Left ventricle myocardium inferior (tissue), 1 donor: ENCODE measurements at regions of chr15 and their contacts with region 1.

Region 1: DNA sequence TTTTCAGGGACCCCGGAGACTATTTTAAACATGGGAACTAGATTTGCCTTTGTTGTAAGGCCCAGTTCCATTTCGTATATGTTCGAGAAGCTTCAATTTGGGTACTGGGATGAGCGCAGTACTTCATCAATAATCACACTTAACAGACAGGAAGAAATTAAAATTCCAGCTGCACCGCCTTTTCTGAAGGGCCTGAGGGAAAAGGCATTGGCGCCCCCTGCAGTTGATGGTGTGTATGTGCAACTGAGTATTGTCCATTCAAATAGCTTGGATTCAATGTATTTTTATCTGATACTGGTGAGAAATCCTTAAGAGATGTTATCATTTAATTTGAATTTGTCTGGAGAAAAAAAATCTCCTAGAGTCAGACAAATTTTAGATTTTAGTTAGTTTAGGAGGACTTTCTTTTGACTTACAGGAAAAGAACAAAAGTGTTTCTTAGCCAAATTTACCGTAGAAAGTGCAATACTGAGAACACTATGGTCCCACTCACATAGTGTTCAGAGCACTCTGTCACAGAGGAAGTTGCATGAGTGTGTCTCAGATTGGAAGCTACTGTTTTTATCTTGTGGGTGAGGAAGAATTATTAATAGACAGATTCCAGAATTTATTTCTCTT is 5.4 kb upstream of the ALDH1A2 start:
- DNase-seq: peak; percentile 52
- H3K4me3 ChIP-seq: no peak overlapping the region
- H3K27ac ChIP-seq: no peak overlapping the region
- H3K4me1 ChIP-seq: peaks cover 8% of the 10 kb centered on the region
- H3K27me3 ChIP-seq: peaks cover 50% of the 10 kb centered on the region
- CTCF ChIP-seq: peak; percentile 95

Region 2: DNA sequence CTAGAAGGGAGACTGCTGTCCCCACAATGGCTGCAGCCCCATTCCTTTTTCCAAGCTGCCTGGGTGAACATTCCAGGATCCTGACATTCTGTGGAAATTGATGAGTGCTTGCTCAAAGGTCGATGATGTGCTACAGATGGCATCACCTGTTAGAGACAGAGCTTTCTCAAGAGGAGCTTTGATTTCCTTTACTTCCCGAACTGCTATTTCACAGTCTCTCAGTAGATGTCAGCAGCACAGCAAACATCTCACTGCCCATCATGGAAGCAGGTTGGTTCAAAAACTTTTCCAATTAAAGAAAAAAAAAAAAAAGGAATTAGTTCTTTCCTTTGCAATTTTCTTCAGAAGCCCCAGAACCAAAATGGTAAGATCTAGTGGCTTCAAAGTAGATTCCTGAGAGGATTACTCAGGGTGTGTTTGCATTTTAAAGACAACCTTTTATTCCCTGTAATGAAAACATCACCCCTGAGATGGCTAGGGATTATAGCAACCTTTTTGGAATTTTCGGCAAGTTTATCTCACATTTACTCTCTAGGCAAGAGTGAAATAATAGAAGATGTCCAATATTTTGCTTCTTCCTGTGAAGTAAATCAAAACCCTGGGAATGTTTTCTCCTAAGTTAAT is 319.6 kb before region 1 on chr15:
- intact Hi-C with region 1: loop called (anchors 10 kb)
- DNase-seq: no peak
- H3K4me3 ChIP-seq: no peak overlapping the region
- H3K27ac ChIP-seq: no peak overlapping the region
- H3K4me1 ChIP-seq: peaks cover 9% of the 10 kb centered on the region
- H3K27me3 ChIP-seq: no peaks in the 10 kb centered on the region
- CTCF ChIP-seq: peak; percentile 68

Region 3: DNA sequence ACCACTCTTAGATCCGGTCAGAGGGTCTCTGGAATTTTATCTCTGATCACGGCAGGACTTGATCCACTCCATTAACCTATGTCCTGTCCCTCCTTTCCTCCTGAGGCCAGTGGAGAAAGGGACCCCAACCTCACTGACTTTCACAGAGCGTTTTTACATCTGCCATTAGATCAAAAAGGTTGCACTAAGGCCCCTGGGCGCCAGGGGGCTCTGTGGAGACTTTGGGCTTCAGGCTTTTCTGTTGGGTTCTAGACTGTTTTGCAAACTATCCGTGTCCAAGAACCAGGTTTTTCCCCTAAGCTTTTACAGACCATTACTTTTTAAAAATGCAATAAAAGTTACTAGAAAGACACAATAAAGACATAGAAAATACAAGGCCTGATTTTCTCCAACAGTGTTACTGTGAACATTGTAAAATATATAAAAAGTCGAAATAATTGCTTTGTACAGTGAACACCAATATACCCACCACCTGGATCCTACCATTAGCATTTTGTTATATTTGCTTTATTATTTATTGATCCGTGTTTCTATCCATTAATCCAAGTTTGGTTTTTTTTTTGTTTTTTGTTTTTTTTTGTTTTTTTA is 204.7 kb before region 1 on chr15:
- intact Hi-C with region 1: loop called (anchors 5 kb)
- DNase-seq: peak; percentile 68
- H3K4me3 ChIP-seq: no peak overlapping the region
- H3K27ac ChIP-seq: no peak overlapping the region
- H3K4me1 ChIP-seq: no peaks in the 10 kb centered on the region
- H3K27me3 ChIP-seq: peaks cover 17% of the 10 kb centered on the region
- CTCF ChIP-seq: peak; percentile 85

Region 4: DNA sequence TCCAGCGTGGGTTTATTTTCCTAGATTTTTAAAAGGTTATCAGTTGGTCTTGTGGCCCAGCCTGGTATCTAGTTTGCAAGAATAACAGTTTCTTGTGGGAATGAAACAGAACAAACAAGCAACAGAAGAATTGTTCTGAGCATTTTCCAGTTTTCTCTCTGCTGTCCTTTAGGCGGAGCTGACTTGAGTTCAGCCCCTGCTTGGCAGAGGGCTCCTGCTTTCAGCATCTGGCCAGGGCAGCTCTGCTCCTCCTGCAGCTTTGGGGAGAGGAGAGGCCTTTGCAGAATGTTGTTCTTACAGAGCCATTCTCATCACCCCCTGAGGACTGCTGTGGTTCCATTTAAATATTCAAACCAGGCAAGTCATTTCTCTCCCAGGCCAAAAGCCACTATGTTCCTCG is 123.1 kb before region 1 on chr15:
- intact Hi-C with region 1: no loop called
- DNase-seq: peak; percentile 43
- H3K4me3 ChIP-seq: no peak overlapping the region
- H3K27ac ChIP-seq: peak overlapping the region; percentile 21
- H3K4me1 ChIP-seq: no peaks in the 10 kb centered on the region
- H3K27me3 ChIP-seq: no peaks in the 10 kb centered on the region
- CTCF ChIP-seq: no peak

Region 5: DNA sequence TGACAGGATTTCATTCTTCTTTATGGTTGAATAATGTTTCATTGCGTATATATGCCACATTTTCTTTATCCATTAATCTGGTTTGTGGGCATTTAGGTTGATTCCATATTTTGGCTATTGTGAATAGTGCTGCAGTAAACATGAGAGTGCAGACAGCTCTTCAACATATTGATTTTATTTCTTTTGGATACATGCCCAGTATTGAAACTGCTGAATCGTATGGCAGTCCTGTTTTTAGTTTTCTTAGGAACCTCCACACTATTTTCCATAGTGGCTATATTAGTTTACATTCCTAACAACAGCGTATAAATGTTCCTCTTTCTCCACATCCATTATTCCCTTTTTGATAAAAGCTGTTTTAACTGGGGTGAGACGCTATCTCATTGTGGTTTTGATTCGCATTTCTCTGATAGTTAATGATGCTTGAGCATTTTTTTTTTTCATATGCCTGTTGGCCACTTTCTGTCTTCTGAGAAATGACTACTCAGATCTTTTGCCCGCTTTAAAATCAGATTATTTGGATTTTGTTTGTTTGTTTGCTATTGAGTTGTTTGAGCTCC is 89.0 kb after region 1 on chr15:
- intact Hi-C with region 1: no loop called
- DNase-seq: no peak
- H3K4me3 ChIP-seq: no peak overlapping the region
- H3K27ac ChIP-seq: no peak overlapping the region
- H3K4me1 ChIP-seq: no peaks in the 10 kb centered on the region
- H3K27me3 ChIP-seq: peaks cover 12% of the 10 kb centered on the region
- CTCF ChIP-seq: no peak

Region 6: GRCh38 chr15:58190419-58190818 is 119.5 kb after region 1 on chr15:
- intact Hi-C with region 1: no loop called
- DNase-seq: no peak
- H3K4me3 ChIP-seq: no peak overlapping the region
- H3K27ac ChIP-seq: no peak overlapping the region
- H3K4me1 ChIP-seq: no peaks in the 10 kb centered on the region
- H3K27me3 ChIP-seq: peaks cover 26% of the 10 kb centered on the region
- CTCF ChIP-seq: no peak

Region 7: GRCh38 chr15:58396181-58396580 is 325.3 kb after region 1 on chr15:
- intact Hi-C with region 1: no loop called
- DNase-seq: no peak
- H3K4me3 ChIP-seq: no peak overlapping the region
- H3K27ac ChIP-seq: no peak overlapping the region
- H3K4me1 ChIP-seq: no peaks in the 10 kb centered on the region
- H3K27me3 ChIP-seq: no peaks in the 10 kb centered on the region
- CTCF ChIP-seq: no peak